Posterior cingulate gyrus (tissue), 11 donors: ENCODE measurements at regions of chr2 and their contacts with region 1.

Region 1: DNA sequence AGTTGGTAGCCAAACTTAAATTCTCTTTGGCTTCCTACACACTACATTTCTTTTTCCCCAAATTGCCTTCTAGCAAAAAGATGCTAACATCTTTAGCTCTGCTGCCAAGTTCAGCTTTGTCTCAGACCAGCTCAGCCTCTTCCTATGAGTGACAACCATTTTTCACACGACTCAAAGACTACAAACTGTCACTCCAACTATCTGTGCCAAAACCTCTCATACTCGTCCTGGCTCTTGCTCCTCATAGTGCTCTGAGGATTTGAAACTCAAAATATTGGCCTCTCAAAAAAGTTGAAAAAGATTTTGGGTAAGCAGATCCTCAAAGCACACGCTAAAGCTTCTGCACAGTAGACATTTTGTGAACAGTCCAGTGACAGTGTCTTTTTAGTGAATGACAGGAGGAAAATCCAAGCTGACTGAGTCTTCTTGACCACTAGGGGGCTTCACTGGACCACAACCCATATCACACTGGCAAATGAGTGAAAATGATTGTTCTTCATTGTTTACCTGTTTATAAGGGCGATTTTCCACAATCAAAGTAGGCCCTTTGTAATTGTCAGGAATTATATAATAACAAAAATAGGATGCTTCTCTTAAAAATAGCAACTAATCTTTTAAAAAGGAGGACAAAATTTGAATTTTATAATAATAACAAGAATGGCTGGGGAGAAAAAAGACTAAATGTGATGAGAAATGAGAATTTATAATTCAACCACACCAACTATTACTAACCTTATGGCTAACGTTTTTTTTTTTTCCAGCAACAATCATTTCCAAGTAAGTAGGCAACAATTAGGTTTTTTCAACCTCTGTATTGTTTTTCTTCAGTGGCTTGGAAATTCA is 85.5 kb upstream of the PGAP1 start:
- DNase-seq: peak in 2 of 10 donors; percentile 39 to 57

Region 2: GRCh38 chr2:196926562-196927375 is 85.3 kb before region 1 on chr2 and contains the start of gene PGAP1:
- intact Hi-C with region 1: loop called (anchors 2 kb)
- DNase-seq: peak; percentile 81 to 97 (median 86)

Region 3: DNA sequence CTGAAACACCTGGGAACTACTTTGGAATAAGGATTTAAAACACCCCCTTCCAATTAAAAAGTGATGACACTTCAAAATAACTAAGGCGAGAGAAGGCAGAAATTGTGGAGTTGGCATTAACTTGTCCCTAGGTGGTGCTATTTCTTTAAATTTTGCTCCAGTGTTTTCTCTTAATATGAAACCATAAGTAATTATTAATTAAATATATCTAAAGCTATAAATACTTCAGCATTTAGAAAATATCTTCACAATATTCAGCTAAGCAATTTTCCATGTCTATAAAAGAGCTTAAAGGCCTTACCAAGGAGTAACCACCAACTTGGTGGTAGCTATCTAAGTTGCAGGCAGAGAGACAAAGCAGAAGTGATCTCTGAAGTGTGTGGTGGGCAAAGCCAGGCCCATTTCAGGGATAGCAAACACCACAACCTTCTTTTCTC is 101.3 kb after region 1 on chr2:
- intact Hi-C with region 1: loop called (anchors 5 kb)
- DNase-seq: no peak

Region 4: DNA sequence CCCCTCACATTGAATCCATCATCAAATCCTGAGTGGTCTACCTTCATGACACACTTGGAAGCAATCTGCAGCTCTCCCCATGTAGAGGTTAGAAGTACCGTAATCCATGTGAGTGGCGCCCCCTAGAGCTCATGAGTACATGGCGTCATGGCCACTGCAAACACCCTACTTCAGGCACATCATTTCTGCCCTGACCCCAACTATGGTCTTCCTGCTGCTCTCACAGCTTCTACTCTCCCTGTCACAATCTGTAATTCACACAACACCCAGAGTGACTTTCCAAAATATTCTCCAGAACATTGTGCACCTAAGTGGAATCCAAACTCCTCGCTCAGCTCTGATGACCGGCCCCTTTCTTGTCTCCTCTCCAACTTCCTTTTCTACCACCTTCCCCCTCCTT is 156.7 kb after region 1 on chr2:
- intact Hi-C with region 1: loop called (anchors 5 kb)
- DNase-seq: peak in 9 of 10 donors; percentile 44 to 94 (median 76)